ENCODE measurements at regions of chr16 and their contacts with region 1.

Region 1: DNA sequence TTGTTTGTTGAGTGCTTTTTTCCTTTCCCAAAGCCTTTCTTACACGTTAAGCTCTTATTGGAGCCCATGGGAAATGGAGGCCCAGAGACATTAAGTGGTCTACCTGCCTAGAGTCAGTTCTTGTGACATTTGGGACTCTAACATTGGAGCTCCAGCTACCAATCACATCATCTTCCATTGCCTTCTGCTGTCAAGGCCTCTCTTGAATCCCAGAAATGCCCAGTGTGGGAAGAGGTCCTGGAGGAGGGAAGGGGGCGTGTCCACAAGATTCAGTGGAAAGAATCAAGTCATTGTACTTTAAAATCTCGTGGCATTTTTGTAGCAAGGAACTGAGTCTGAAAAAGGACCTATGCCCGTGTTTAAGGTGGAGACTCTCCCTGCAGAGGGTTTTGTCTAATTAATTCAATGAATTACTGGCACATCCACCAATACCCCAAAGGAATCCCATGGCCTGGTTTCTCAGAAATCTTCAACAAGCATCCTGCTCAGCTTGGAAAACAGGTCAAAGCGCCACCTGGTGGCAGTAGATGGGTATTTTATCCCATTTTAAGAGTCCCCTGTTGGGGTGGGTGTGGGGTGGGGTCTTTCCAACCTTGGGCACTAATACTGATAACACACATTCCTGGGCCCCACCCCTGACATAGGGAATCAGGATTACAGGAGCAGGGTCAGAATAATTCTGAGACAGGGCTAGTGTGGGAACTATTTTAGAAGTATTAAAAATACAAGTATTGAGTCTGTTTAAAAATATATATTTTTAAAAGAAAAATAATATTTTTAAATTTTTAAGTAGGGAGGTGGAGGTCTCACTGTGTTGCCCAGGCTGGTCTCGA is 24.6 kb downstream of the GPT2 start:
- DNase-seq: peak in 1 of 3 donors; percentile 60
- ATAC-seq: peak; percentile 54 to 74
- H3K4me3 ChIP-seq: no peak overlapping the region
- H3K27ac ChIP-seq: no peak overlapping the region
- H3K4me1 ChIP-seq: no peaks in the 10 kb centered on the region
- H3K27me3 ChIP-seq: no peaks in the 10 kb centered on the region

Region 2: DNA sequence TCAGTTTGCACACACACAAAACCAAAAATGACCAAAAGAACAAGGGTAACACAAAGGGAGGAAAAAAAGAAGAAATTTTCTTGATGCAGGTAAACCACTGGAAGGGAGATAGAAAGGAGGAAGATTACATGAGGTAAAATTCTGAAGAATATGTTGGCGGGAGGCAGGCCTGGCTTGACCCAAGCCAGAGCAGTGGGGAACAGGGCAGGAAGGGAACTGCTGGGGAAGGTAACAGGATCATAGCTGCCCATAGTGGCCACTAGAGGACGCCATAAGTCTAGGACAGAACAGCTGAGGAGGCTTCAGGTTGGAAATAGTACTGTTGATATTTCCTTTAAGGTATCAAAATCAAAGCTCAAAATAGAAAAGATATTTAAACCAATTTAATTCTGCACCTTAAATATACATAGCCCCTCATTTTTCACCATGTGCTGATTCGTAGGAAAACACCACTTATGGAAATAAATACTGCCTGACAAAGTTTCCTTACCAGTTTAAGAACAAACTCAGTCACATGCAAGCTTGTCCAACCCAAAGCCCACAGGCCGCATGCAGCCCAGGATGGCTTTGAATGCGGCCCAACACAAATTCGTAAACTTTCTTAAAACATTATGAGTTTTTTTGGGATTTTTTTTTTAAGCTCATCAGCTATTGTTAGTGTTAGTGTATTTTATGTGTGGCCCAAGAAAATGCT is 235.3 kb before region 1 on chr16:
- intact Hi-C with region 1: loop called in 1 of 4 experiments (anchors 5 kb)
- DNase-seq: peak in 2 of 3 donors; percentile 23 to 52
- ATAC-seq: peak; percentile 83 to 88
- H3K4me3 ChIP-seq: no peak overlapping the region
- H3K27ac ChIP-seq: no peak overlapping the region
- H3K4me1 ChIP-seq: no peaks in the 10 kb centered on the region
- H3K27me3 ChIP-seq: no peaks in the 10 kb centered on the region

Region 3: DNA sequence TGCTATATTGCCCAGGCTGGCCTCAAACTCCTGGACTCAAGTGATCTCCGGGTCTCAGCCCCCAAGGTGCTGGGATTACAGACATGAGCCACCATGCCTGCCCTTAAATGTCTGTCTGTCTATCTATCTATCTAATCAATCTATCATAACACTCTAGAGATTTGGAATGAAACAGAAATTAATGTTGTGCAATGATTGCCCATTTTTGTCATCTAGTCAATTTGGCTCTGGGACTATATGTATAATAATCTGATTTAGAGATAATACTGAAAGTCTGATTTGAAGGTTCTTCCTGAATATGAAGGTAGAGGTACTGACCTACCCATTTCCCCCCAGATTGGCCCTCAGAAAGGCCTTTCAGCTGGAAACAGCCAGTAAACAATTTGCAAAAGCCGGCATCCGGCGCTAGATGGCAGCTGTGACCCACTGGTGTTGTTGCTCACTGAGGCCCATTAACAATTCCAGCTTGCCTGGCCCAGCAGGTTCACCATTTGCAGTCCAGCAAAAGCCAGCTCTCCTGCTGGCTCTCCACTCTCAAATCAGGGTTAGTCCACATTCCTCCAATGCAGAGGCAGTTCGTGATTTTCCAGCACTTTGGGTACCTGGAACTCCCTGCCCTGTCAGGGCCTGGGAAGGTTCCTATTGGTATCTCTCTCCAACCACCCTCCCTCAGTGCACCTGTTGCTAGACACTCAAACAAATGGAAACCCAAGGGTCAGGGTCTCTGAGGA is 54.9 kb before region 1 on chr16:
- intact Hi-C with region 1: loop called (anchors 2 to 5 kb)
- DNase-seq: peak; percentile 74 to 89 (median 85)
- ATAC-seq: peak; percentile 71 to 76
- H3K4me3 ChIP-seq: no peak overlapping the region
- H3K27ac ChIP-seq: no peak overlapping the region
- H3K4me1 ChIP-seq: no peaks in the 10 kb centered on the region
- H3K27me3 ChIP-seq: no peaks in the 10 kb centered on the region

Region 4: GRCh38 chr16:46947900-46948547 is 39.3 kb after region 1 on chr16:
- intact Hi-C with region 1: no loop called
- DNase-seq: no peak
- ATAC-seq: peak in 1 of 2 donors; percentile 38
- H3K4me3 ChIP-seq: no peak overlapping the region
- H3K27ac ChIP-seq: no peak overlapping the region
- H3K4me1 ChIP-seq: no peaks in the 10 kb centered on the region
- H3K27me3 ChIP-seq: no peaks in the 10 kb centered on the region